Activated CD4-positive, alpha-beta T cell treated with anti-CD3 and anti-CD28 coated beads, Interleukin-2, amount 10 ng/mL, durations not matched to agents 24 days and 14 days (primary cell): ENCODE measurements at regions of chr9 and their contacts with region 1.

Region 1: GRCh38 chr9:69877854-69878514 is 57.4 kb downstream of the CFAP95 start:
- DNase-seq: no peak
- H3K4me3 Mint-ChIP-seq: no peak overlapping the region
- H3K27ac Mint-ChIP-seq: no peak overlapping the region
- H3K4me1 Mint-ChIP-seq: no peaks in the 10 kb centered on the region
- H3K27me3 Mint-ChIP-seq: peaks cover 18% of the 10 kb centered on the region

Region 2: DNA sequence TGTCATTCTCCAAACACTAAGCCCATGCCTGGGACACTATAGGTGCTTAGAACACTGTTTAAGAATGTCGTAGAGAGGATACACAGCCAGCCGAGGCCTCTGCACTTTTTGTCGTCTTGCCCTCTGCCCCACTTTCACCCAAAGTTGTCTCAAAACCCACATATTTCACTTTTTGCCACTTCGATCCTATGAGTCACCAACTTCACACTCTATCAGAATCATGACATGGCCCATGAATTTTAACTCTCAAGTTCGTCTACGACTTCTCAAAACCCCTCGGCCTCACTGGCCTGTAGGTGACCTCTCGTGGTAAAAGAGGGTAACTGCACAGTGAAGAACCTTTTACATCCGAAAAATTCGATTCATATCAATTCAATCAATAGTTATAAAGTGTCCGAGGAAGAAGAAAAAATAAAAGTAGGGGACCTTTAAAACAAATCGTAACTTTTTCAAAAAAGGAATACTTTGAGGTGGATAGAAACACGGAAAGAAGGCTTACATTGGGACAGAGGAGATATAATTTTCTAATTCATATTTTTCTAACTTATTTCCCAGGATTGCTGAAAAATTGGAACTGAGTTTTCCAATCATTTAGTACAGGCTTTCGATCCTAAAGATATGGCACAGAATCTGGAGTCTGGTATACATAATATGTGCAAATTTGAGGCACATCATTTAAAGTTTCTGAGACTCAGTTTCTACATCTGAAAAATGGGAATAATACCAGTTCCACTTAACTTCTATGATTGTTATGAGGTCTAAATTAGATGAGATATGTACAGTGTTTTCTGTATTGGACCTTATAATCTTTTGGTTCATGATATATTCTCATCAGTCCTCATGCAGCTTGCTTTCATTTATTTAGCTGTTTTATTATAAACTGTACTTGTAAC is 328.4 kb before region 1 on chr9:
- intact Hi-C with region 1: loop called (anchors 10 kb)
- DNase-seq: peak; percentile 76
- H3K4me3 Mint-ChIP-seq: no peak overlapping the region
- H3K27ac Mint-ChIP-seq: no peak overlapping the region
- H3K4me1 Mint-ChIP-seq: peaks cover 4% of the 10 kb centered on the region
- H3K27me3 Mint-ChIP-seq: peaks cover 31% of the 10 kb centered on the region

Region 3: DNA sequence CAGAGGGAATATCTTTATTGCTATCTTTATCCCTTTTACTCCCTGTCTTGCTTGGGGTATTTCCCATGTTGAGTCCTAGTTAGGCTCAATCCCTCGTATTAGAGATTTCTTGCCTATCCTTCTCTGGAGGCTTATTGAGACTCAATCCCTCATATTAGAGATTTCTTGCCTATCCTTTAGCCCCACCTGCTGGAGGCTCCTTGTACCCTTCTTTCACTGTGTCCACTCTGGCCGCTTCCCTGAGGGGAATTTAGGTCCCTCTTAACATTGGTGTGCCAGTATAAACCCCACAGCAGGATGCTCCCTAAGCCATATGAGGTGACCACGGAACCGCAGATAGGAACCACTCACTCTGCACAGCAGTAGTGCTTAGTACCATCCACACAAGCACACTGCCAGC is 54.9 kb after region 1 on chr9:
- intact Hi-C with region 1: no loop called
- DNase-seq: no peak
- H3K4me3 Mint-ChIP-seq: no peak overlapping the region
- H3K27ac Mint-ChIP-seq: no peak overlapping the region
- H3K4me1 Mint-ChIP-seq: no peaks in the 10 kb centered on the region
- H3K27me3 Mint-ChIP-seq: peaks cover 12% of the 10 kb centered on the region